GM12878 (cell line): ENCODE measurements at regions of chr4 and their contacts with region 1.

Region 1: GRCh38 chr4:180295904-180296599 is 1947.2 kb upstream of the TENM3 start:
- DNase-seq: peak; percentile 30
- ATAC-seq: no peak
- H3K4me3 ChIP-seq: no peak overlapping the region
- H3K27ac ChIP-seq: no peak overlapping the region
- H3K4me1 ChIP-seq: no peaks in the 10 kb centered on the region
- H3K27me3 ChIP-seq: no peaks in the 10 kb centered on the region
- CTCF ChIP-seq: no peak
- EP300 ChIP-seq: no peak
- POLR2A ChIP-seq: no peak
- RAD21 ChIP-seq: no peak

Region 2: DNA sequence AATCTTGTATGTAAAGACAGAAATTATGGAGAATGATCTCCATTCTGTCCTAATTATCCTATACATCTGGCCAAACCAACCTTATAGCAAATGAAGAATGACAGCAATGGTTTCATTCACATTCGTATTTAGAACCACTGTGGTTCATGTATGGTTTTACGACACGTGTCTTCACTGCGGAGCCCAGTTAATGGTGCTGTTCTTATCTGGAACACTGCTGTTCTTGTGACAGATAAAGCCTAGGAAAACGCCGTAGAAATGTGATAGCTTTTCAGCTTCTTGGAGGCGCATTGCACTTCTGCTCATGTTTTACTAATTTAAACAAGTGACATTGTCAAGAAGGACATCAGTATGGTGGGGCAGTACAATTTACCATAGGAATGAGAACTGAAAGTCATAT is 319.3 kb before region 1 on chr4:
- CTCF ChIA-PET with region 1: no interaction called
- POLR2A ChIA-PET with region 1: no interaction called
- RAD21 ChIA-PET with region 1: no interaction called
- SMC1A ChIA-PET with region 1: no interaction called
- in situ Hi-C with region 1: no loop called
- intact Hi-C with region 1: no loop called
- DNase-seq: no peak
- ATAC-seq: no peak
- H3K4me3 ChIP-seq: no peak overlapping the region
- H3K27ac ChIP-seq: no peak overlapping the region
- H3K4me1 ChIP-seq: no peaks in the 10 kb centered on the region
- H3K27me3 ChIP-seq: no peaks in the 10 kb centered on the region
- CTCF ChIP-seq: no peak
- EP300 ChIP-seq: no peak
- POLR2A ChIP-seq: no peak
- RAD21 ChIP-seq: no peak

Region 3: GRCh38 chr4:180285796-180286195 is 10.3 kb before region 1 on chr4:
- CTCF ChIA-PET with region 1: no interaction called
- POLR2A ChIA-PET with region 1: no interaction called
- RAD21 ChIA-PET with region 1: no interaction called
- SMC1A ChIA-PET with region 1: interaction called, 14 read pairs
- in situ Hi-C with region 1: no loop called
- intact Hi-C with region 1: no loop called
- DNase-seq: peak; percentile 34
- ATAC-seq: peak; percentile 77
- H3K4me3 ChIP-seq: no peak overlapping the region
- H3K27ac ChIP-seq: no peak overlapping the region
- H3K4me1 ChIP-seq: no peaks in the 10 kb centered on the region
- H3K27me3 ChIP-seq: no peaks in the 10 kb centered on the region
- CTCF ChIP-seq: no peak
- EP300 ChIP-seq: no peak
- POLR2A ChIP-seq: no peak
- RAD21 ChIP-seq: no peak

Region 4: DNA sequence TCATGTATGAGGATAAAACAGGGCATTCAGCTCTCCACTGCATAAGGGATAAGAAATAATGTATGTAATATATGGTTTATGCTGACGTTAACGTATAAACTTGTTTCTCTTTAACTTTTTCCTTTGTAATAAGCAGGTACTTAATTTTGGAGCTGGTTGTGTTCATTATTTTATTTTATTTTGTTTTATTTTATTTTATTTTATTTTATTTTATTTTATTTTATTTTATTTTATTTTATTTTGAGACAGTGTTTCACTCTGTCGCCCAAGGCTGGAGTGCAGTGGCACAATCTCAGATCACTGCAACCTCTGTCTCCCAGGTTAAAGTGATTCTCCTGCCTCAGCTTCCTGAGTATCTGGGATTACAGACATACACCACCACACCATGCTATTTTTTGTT is 14.6 kb after region 1 on chr4:
- CTCF ChIA-PET with region 1: no interaction called
- POLR2A ChIA-PET with region 1: no interaction called
- RAD21 ChIA-PET with region 1: no interaction called
- SMC1A ChIA-PET with region 1: no interaction called
- in situ Hi-C with region 1: no loop called
- intact Hi-C with region 1: no loop called
- DNase-seq: no peak
- ATAC-seq: no peak
- H3K4me3 ChIP-seq: no peak overlapping the region
- H3K27ac ChIP-seq: no peak overlapping the region
- H3K4me1 ChIP-seq: no peaks in the 10 kb centered on the region
- H3K27me3 ChIP-seq: no peaks in the 10 kb centered on the region
- CTCF ChIP-seq: no peak
- EP300 ChIP-seq: no peak
- POLR2A ChIP-seq: no peak
- RAD21 ChIP-seq: no peak